ENCODE measurements at regions of chr9 and their contacts with region 1.

Region 1: GRCh38 chr9:72592502-72593403 is 71.3 kb downstream of the TMC1 start:
- DNase-seq: no peak
- ATAC-seq: peak; percentile 88
- H3K4me3 ChIP-seq: no peak overlapping the region
- H3K27ac ChIP-seq: no peak overlapping the region
- H3K4me1 ChIP-seq: peaks cover 4 to 27% of the 10 kb centered on the region in 2 experiments; a peak in 3 of 4 replicates
- H3K27me3 ChIP-seq: no peaks in the 10 kb centered on the region
- CTCF ChIP-seq: peak; percentile 62 to 86 (median 75)
- POLR2A ChIP-seq: no peak
- RAD21 ChIP-seq: peak; percentile 91

Region 2: DNA sequence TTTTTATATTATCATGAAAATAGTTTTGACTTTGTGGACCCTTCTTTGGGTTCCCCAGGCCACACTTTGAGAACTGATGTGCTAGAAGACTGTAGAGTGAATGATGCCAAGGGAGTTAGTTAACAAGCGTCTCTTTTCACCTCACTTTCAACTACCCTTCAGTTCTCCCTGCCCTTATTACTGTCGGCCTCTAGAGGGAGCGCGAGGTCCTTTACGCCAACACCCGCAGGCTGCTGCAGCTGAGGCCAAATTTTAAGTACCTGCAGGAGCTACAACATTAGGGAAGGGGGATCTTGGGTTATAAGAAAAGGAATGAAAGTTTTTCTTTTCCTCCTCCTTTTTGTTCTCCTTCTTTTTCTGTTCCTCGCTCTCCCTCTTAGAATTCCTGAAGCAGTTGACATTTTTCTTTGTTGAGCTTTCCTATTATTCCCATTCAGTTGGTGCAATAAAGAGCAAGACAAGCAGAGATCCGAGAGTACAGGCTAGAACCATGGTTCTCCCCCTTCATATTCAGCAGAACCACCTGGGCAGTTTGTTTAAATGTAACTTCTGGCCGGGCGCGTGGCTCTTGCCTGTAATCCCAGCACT is 311.7 kb before region 1 on chr9:
- CTCF ChIA-PET with region 1: interaction called, 10 read pairs
- POLR2A ChIA-PET with region 1: no interaction called
- RAD21 ChIA-PET with region 1: interaction called in 1 of 2 experiments, 4 read pairs
- intact Hi-C with region 1: loop called (anchors 1 kb)
- DNase-seq: peak; percentile 60
- ATAC-seq: peak; percentile 98
- H3K4me3 ChIP-seq: no peak overlapping the region
- H3K27ac ChIP-seq: no peak overlapping the region
- H3K4me1 ChIP-seq: no peaks in the 10 kb centered on the region
- H3K27me3 ChIP-seq: no peaks in the 10 kb centered on the region
- CTCF ChIP-seq: peak; percentile 91 to 96 (median 91)
- POLR2A ChIP-seq: no peak
- RAD21 ChIP-seq: peak; percentile 96

Region 3: DNA sequence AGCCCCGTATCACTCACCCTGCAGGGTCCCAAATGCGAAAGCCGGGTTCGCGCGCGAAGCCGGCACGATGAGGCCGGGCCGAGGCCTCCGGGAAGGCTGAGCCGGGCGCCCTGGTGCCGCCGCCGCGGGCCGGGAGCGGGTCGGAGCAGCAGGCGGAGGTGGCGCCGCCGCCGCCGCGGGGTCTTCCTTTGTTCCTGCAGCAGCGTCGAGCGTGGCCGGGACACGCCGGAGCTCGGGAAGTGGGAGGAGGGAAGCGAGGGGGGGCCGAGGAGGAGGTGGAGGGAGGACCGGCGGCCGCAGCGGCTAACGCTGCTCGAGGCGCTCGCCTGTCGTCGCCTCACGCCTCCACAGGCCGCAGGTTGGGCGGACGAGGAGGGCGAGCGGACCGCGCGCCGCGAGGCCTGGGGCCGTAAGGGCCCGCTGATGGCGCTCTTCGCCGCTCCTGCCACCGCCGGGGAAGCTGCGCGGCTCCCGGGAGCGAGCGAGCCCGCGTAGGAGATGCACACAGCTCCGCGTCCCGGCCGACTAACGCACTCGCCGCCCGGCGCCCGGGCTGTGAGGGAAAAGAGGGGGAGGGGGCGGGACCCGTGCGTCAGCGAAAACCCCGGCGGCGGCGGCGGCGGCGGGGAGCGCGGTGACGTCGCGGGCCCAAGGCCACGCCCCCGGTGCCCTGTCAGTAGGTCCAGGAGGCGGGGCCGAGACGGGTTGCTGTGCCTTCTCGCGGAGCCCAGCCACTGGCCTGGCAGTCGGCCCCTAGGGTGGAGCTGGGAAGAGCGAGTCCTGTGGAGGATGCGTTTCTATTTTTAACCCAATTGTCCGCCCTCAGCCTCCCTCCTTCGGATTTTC is 227.9 kb before region 1 on chr9 and contains the start of gene ZFAND5:
- CTCF ChIA-PET with region 1: interaction called, 3 read pairs
- POLR2A ChIA-PET with region 1: interaction called, 18 read pairs
- RAD21 ChIA-PET with region 1: interaction called in 1 of 2 experiments, 3 read pairs
- intact Hi-C with region 1: loop called (anchors 1 kb)
- DNase-seq: peak; percentile 90
- ATAC-seq: peak; percentile 92
- H3K4me3 ChIP-seq: peak within 1 kb of the TSS; percentile 89 to 90
- H3K27ac ChIP-seq: peak within 1 kb of the TSS; percentile 91
- H3K4me1 ChIP-seq: peaks cover 29 to 38% of the 10 kb centered on the region in 2 experiments
- H3K27me3 ChIP-seq: no peaks in the 10 kb centered on the region
- CTCF ChIP-seq: no peak
- POLR2A ChIP-seq: peak; percentile 98
- RAD21 ChIP-seq: peak; percentile 62
- total RNA-seq, gene ZFAND5: 128 TPM

Region 4: GRCh38 chr9:72577212-72577753 is 15.5 kb before region 1 on chr9:
- CTCF ChIA-PET with region 1: interaction called, 12 read pairs
- POLR2A ChIA-PET with region 1: interaction called, 5 read pairs
- RAD21 ChIA-PET with region 1: no interaction called
- intact Hi-C with region 1: no loop called
- DNase-seq: peak; percentile 68
- ATAC-seq: peak; percentile 37
- H3K4me3 ChIP-seq: peak overlapping the region; percentile 12 to 38; a peak in 3 of 4 replicates
- H3K27ac ChIP-seq: peak overlapping the region; percentile 81
- H3K4me1 ChIP-seq: peaks cover 65 to 88% of the 10 kb centered on the region in 2 experiments
- H3K27me3 ChIP-seq: no peaks in the 10 kb centered on the region
- CTCF ChIP-seq: no peak
- POLR2A ChIP-seq: no peak
- RAD21 ChIP-seq: peak; percentile 47

Region 5: GRCh38 chr9:72943844-72944462 is 351.2 kb after region 1 on chr9:
- CTCF ChIA-PET with region 1: no interaction called
- POLR2A ChIA-PET with region 1: no interaction called
- RAD21 ChIA-PET with region 1: no interaction called
- intact Hi-C with region 1: no loop called
- DNase-seq: no peak
- ATAC-seq: no peak
- H3K4me3 ChIP-seq: no peak overlapping the region
- H3K27ac ChIP-seq: no peak overlapping the region
- H3K4me1 ChIP-seq: no peaks in the 10 kb centered on the region
- H3K27me3 ChIP-seq: peaks cover 24% of the 10 kb centered on the region
- CTCF ChIP-seq: no peak
- POLR2A ChIP-seq: no peak
- RAD21 ChIP-seq: no peak

Region 6: GRCh38 chr9:73154760-73155159 is 562.0 kb after region 1 on chr9:
- CTCF ChIA-PET with region 1: no interaction called
- POLR2A ChIA-PET with region 1: no interaction called
- RAD21 ChIA-PET with region 1: no interaction called
- intact Hi-C with region 1: no loop called
- DNase-seq: no peak
- ATAC-seq: no peak
- H3K4me3 ChIP-seq: no peak overlapping the region
- H3K27ac ChIP-seq: peak overlapping the region; percentile 95; the same call in 1 of the 2 replicates
- H3K4me1 ChIP-seq: peaks cover 37 to 60% of the 10 kb centered on the region in 2 experiments
- H3K27me3 ChIP-seq: no peaks in the 10 kb centered on the region
- CTCF ChIP-seq: no peak
- POLR2A ChIP-seq: no peak
- RAD21 ChIP-seq: no peak